Activated naive CD4-positive, alpha-beta T cell treated with anti-CD3 and anti-CD28 coated beads for 36 hours (primary cell): ENCODE measurements at regions of chr11 and their contacts with region 1.

Region 1: GRCh38 chr11:96267496-96268032 is 75.4 kb downstream of the MAML2 start:
- DNase-seq: peak; percentile 78
- H3K4me3 Mint-ChIP-seq: peak overlapping the region; percentile 29
- H3K27ac Mint-ChIP-seq: peak overlapping the region; percentile 89
- H3K4me1 Mint-ChIP-seq: peaks cover 96% of the 10 kb centered on the region
- H3K27me3 Mint-ChIP-seq: no peaks in the 10 kb centered on the region

Region 2: DNA sequence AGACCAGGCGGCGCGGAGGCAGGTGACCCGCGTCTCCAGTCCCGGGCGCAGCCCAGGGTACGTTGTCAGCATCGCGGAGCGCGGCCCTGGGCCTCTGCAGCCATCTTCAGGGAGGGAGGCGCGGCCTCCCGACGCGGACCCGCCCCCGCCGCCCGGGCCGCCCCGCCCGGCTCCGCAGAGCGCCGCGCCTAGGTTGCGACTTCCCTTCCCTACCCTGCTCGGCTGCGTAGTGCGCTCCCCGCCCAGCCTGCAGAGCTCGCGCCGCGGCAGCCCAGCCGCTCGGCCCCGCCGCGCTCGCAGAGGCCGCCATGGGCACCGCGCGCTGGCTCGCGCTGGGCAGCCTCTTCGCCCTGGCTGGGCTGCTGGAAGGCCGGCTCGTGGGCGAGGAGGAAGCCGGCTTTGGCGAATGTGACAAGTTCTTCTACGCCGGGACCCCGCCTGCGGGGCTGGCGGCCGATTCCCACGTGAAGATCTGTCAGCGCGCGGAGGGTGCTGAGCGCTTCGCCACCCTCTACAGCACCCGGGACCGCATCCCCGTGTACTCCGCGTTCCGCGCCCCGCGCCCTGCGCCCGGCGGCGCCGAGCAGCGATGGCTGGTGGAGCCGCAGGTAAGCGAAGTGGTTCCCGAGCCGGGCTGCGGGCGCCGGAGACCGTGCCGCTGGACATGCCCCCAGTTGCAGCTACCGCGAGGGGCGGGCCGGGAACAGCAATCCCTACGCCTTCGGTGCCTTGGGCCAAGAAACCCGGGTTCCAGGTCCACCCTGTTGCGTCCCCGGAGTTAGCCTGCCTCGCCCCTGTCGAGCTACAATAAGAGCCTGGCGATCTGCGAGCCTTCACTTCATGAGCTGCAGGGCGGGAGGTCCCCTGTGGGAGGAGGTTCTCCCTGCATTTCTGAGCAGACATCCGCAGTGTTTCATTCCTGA is 1177.7 kb before region 1 on chr11 and contains the start of gene ENDOD1:
- CTCF ChIA-PET with region 1: no interaction called
- intact Hi-C with region 1: loop called (anchors 5 kb)
- DNase-seq: peak; percentile 82
- H3K4me3 Mint-ChIP-seq: peak within 1 kb of the TSS; percentile 86
- H3K27ac Mint-ChIP-seq: peak within 1 kb of the TSS; percentile 87
- H3K4me1 Mint-ChIP-seq: peaks cover 64% of the 10 kb centered on the region
- H3K27me3 Mint-ChIP-seq: no peaks in the 10 kb centered on the region
- total RNA-seq, gene ENDOD1: 14.5 to 15.2 TPM

Region 3: DNA sequence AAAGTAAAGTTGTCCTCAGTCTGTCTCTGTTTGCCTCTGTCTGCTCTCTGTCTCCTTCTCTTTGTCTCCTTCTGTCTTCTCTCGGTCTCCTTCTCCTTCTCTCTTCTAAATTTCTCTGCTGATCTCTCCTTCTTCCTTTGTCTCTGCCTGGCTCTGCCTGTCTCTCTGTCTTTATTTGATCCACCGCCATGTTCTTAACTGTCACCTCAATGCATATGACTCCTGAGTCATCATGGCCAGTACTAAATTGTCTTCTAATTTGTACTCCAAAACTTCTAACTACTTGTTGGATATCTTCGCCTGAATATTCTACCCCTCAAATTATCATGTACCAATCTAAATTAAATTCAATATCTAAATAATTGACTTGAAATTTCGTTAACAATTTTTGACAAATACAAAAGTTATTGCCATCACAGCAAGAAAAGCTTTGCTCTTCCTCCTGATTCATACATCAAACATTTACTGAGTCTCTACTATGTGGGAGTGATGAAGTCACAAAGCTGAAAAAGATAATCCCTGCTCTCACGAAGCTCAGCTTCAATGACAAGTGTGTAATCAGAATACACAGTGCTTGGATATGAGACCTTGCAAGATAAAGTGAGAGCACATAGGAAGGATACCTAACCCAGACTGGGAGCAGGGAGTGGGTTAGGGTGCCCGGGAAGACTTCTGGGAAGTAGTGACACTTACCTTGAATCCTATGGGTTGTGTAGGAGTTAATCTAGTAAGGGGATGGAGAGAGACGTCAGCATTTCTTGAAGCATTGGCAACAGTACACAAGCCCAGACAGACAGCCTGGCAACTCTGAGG is 117.6 kb before region 1 on chr11:
- CTCF ChIA-PET with region 1: no interaction called
- intact Hi-C with region 1: loop called (anchors 1 kb)
- DNase-seq: no peak
- H3K4me3 Mint-ChIP-seq: no peak overlapping the region
- H3K27ac Mint-ChIP-seq: no peak overlapping the region
- H3K4me1 Mint-ChIP-seq: peaks cover 59% of the 10 kb centered on the region
- H3K27me3 Mint-ChIP-seq: no peaks in the 10 kb centered on the region

Region 4: DNA sequence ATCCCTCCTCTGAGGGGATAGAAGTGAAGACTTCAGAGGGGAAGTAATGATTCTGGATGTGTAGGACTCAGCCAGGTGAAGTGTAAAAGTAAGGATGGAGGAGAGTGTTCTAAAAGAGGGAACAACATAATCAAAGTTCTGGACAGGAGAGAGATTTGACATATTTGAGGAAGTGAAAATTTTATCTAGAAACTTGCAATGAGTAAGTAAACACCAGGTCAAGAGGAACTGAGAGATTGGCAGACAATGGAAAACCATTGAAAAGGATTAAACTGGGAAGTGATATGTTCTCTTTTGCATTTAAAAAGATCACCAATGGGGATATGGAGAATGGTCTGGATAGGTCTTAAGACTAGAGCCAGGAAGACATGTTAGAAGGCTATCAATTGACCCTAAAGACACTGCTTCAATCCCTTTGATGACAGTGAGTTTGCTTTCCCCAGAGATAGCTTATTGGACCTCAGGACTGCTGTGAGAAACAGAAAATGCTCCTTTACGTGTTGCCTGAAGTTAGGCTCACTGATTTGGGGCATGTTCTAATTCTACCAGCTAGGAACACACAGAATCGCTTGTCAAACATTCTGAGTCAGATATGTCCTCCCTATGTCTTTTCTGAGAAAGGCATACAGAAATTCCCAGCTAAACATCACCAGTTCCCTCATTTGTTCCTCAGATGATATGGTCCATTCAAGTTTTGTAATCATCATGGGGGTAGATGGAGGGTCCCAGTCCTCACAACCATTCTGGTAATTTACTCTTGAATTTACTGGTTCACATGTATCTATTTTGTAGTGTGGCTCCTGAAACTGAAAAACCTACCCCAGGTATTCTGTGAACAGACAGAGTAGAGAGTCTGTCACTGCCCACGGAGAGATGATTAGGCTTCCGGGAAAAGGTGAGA is 69.5 kb before region 1 on chr11:
- CTCF ChIA-PET with region 1: no interaction called
- intact Hi-C with region 1: loop called (anchors 1 kb)
- DNase-seq: no peak
- H3K4me3 Mint-ChIP-seq: no peak overlapping the region
- H3K27ac Mint-ChIP-seq: peak overlapping the region; percentile 85
- H3K4me1 Mint-ChIP-seq: peaks cover 88% of the 10 kb centered on the region
- H3K27me3 Mint-ChIP-seq: no peaks in the 10 kb centered on the region

Region 5: GRCh38 chr11:96242971-96243647 is 24.5 kb before region 1 on chr11:
- CTCF ChIA-PET with region 1: interaction called, 3 read pairs
- intact Hi-C with region 1: loop called (anchors 1 kb)
- DNase-seq: peak; percentile 94
- H3K4me3 Mint-ChIP-seq: peak overlapping the region; percentile 84
- H3K27ac Mint-ChIP-seq: peak overlapping the region; percentile 95
- H3K4me1 Mint-ChIP-seq: peaks cover 54% of the 10 kb centered on the region
- H3K27me3 Mint-ChIP-seq: no peaks in the 10 kb centered on the region

Region 6: GRCh38 chr11:96254087-96254486 is 13.5 kb before region 1 on chr11:
- CTCF ChIA-PET with region 1: interaction called, 3 read pairs
- intact Hi-C with region 1: loop called (anchors 1 kb)
- DNase-seq: peak; percentile 49
- H3K4me3 Mint-ChIP-seq: peak overlapping the region; percentile 58
- H3K27ac Mint-ChIP-seq: peak overlapping the region; percentile 77
- H3K4me1 Mint-ChIP-seq: peaks cover 89% of the 10 kb centered on the region
- H3K27me3 Mint-ChIP-seq: no peaks in the 10 kb centered on the region

Region 7: DNA sequence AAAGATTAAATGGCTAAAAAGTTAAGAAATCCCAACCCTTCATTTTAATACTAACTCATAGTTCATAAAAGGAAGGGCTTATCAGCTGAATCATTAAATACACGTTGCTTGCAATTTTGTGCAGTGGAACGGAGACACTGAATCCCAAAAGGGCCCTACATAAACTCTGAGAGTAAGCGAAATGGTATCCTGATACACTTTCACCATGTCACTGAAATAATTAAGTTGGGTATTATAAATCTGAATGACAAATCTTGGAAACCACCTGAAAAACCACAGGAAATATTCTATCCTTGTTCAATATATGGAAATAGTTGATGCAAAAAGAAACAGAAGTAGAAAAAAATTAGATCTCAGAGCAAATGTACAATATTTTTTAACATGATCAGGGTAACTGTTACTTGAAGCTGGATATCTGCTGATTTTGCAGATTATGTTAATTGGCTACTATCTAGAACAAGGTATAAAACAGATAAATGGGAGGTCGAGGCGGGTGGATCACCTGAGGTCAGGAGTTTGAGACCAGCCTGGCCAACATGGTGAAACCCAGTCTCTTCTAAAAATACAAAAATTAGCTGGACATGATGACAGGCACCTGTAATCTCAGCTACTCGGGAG is 20.4 kb after region 1 on chr11:
- CTCF ChIA-PET with region 1: interaction called, 3 read pairs
- intact Hi-C with region 1: loop called (anchors 2 kb)
- DNase-seq: no peak
- H3K4me3 Mint-ChIP-seq: peak overlapping the region; percentile 4
- H3K27ac Mint-ChIP-seq: peak overlapping the region; percentile 9
- H3K4me1 Mint-ChIP-seq: peaks cover 88% of the 10 kb centered on the region
- H3K27me3 Mint-ChIP-seq: no peaks in the 10 kb centered on the region